Dendritic cell treated with granulocyte-macrophage colony-stimulating factor and Interleukin-4, amounts not matched to agents 40 ng/mL and 50 ng/mL, for 4 days (primary cell): ENCODE measurements at regions of chr15 and their contacts with region 1.

Region 1: GRCh38 chr15:51672155-51672687 is 9.1 kb upstream of the SCG3 start:
- H3K4me3 Mint-ChIP-seq: no peak overlapping the region
- H3K27ac Mint-ChIP-seq: no peak overlapping the region
- H3K4me1 Mint-ChIP-seq: peaks cover 33% of the 10 kb centered on the region
- H3K27me3 Mint-ChIP-seq: peaks cover 9% of the 10 kb centered on the region

Region 2: GRCh38 chr15:51243759-51244158 is 428.5 kb before region 1 on chr15:
- intact Hi-C with region 1: no loop called
- H3K4me3 Mint-ChIP-seq: no peak overlapping the region
- H3K27ac Mint-ChIP-seq: no peak overlapping the region
- H3K4me1 Mint-ChIP-seq: no peaks in the 10 kb centered on the region
- H3K27me3 Mint-ChIP-seq: peaks cover 2% of the 10 kb centered on the region

Region 3: DNA sequence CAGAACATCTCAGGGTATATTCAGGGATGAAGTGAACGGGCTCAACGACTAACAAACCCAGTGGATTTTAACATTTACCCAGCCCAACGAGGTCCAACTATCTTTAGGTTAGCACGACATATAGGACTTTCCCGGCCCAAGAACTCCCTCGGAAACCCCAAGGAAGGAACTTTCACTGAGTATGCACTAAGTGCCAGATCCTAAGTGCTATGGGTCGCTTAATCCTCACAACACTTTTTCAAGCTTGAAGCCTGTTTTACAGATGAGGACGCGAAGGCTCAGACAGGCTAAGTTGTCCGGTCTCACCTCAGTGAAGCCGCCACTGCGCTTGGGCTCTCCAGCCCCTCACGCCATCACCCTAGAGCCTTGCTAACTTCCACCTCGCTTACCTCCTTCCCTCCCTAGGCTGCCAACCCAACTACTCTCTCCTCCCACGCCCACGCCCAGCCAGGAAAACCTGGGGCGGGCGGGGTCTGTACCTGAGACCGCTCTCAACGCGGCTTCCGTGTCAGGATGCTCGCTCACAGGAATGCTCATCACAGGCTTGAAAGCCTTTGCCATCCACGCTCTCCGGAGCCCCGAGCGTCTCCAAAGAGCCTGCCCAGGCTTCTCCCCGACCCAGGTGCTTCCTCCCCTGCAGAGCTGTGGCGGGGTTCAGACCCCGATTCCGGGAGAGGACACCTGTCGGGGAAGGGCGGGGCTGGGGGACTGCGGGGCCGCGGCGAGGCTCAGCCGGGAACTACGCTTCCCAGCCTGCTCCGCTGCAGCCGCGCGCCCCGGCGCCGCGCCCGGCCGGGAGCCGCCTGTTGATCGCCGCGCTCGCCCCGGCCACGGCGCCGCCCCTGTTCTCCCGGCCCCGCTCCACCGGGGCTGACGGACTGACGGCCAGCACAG is 78.8 kb after region 1 on chr15 and contains the start of gene TMOD2:
- intact Hi-C with region 1: loop called (anchors 5 kb)
- H3K4me3 Mint-ChIP-seq: peak within 1 kb of the TSS; percentile 85
- H3K27ac Mint-ChIP-seq: peak within 1 kb of the TSS; percentile 60
- H3K4me1 Mint-ChIP-seq: peaks cover 46% of the 10 kb centered on the region
- H3K27me3 Mint-ChIP-seq: peaks cover 26% of the 10 kb centered on the region